ENCODE measurements at regions of chr16 and their contacts with region 1.

Region 1: DNA sequence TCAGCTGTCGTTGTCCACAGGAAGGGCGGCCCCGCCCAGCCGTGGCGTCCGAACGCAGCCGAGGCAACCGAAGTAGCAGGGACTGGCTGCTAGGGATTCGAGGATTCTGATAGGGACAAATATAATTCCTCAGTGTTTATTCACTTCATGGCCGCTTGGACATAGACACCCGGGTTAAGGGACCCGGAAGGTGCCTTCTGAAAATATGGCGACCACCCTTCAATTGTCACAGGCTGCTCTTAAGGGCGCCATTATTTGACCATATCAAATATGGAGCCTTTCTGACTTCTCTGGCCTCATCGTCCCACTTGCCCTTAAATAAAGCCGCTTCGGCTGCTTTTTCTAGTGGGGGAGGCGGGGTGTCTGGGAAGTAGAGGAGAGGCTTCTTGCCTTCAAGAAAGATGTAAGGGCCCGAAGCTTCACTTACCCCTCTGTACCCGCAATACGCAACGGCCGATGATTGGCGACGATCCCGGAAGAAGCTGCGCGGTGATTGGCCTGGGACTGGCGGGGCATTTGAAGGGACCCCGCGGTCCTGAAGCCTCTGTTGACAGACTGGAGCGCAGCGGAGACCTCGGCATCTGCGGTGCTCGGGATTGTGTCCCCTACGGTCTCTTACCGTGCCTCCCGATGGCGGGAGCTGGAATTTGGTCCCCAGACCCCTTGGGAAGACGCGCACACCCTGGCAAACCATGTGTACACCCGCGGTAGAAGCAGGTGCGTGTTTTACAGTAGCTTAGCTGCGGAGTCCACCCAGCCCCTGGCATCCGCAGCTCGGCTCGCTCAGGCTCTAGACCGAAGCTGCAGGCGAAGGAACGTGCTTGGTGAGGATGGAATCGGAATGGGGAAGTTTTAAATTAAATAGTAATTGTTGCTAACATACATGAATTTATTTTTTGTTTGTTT is at the start of gene ZNF688:
- DNase-seq: peak; percentile 95 to 97 (median 96)
- H3K4me3 ChIP-seq: peak within 1 kb of the TSS; percentile 81 to 87 (median 87)
- H3K4me3 Mint-ChIP-seq: peak within 1 kb of the TSS; percentile 81 to 91
- H3K27ac ChIP-seq: peak within 1 kb of the TSS; percentile 73 to 90
- H3K27ac Mint-ChIP-seq: peak within 1 kb of the TSS; percentile 91 to 98 (median 96)
- H3K4me1 ChIP-seq: peaks cover 48 to 65% of the 10 kb centered on the region in 2 donors
- H3K4me1 Mint-ChIP-seq: peaks cover 52% of the 10 kb centered on the region
- H3K27me3 ChIP-seq: no peaks in the 10 kb centered on the region
- H3K27me3 Mint-ChIP-seq: peaks cover 0 to 1% (median 1%) of the 10 kb centered on the region in 3 donors
- CTCF ChIP-seq: no peak
- polyA plus RNA-seq, gene ZNF688: 10.3 to 24.1 (median 18.9) TPM

Region 2: DNA sequence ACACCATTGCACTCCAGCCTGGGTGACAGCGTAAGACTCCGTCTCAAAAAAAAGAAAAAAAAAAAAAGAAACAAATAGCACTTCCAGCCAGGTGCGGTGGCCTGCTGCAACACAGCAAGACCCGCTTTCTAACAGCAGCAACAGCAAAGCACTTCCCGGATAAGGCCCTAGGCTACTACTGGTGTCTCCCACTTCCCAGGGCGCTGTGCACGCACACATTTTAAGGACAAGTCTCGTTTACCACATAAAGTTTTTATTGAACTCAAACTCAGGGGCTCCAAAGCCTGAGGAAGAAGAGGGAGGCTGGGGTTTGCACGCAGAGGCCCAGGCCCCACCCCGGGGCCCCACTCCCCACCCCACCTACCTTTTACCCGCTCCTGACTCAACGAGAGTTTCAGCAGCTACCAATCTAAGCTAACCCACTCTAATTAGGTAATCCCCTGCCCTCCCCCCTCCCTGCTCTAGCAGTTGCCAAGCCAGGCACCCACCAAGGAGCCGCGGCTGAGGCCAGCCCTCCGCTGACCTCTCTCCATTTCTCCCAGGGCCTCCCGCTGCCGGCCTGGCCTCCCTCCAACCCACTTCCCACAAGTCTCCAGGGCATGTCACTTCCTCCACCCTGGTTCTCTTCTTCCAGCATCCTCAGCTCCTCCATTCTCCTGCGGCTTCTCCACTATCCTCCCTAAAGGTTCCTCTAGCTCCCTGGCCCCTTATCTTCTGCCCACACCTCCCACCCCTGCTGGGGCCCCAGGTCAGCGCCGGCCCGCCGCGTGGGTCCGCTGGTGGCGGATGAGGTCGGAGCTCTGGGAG is 48.0 kb before region 1 on chr16:
- intact Hi-C with region 1: no loop called
- DNase-seq: no peak
- H3K4me3 ChIP-seq: no peak overlapping the region
- H3K4me3 Mint-ChIP-seq: no peak overlapping the region
- H3K27ac ChIP-seq: no peak overlapping the region
- H3K27ac Mint-ChIP-seq: peak overlapping the region in 2 of 7 donors; percentile 50 to 80
- H3K4me1 ChIP-seq: peaks cover 24 to 33% of the 10 kb centered on the region in 2 donors
- H3K4me1 Mint-ChIP-seq: peaks cover 22% of the 10 kb centered on the region
- H3K27me3 ChIP-seq: no peaks in the 10 kb centered on the region
- H3K27me3 Mint-ChIP-seq: peaks cover 0 to 4% (median 0%) of the 10 kb centered on the region in 3 donors
- CTCF ChIP-seq: no peak

Region 3: GRCh38 chr16:30534368-30535105 is 37.4 kb before region 1 on chr16 and contains the start of gene ZNF747:
- intact Hi-C with region 1: loop called (anchors 1 to 5 kb)
- DNase-seq: peak; percentile 76 to 82 (median 81)
- H3K4me3 ChIP-seq: peak within 1 kb of the TSS; percentile 71 to 91 (median 87)
- H3K4me3 Mint-ChIP-seq: peak within 1 kb of the TSS; percentile 90 to 97
- H3K27ac ChIP-seq: peak within 1 kb of the TSS; percentile 76 to 80
- H3K27ac Mint-ChIP-seq: peak within 1 kb of the TSS; percentile 87 to 94 (median 91)
- H3K4me1 ChIP-seq: peaks cover 28 to 35% of the 10 kb centered on the region in 2 donors
- H3K4me1 Mint-ChIP-seq: peaks cover 36% of the 10 kb centered on the region
- H3K27me3 ChIP-seq: no peaks in the 10 kb centered on the region
- H3K27me3 Mint-ChIP-seq: peaks cover 0 to 6% (median 2%) of the 10 kb centered on the region in 3 donors
- CTCF ChIP-seq: no peak
- polyA plus RNA-seq, gene ZNF747: 4.1 to 6.6 (median 4.4) TPM

Region 4: GRCh38 chr16:30657866-30658730 is 86.2 kb after region 1 on chr16 and contains the start of gene FBRS:
- intact Hi-C with region 1: loop called in 1 of 2 experiments (anchors 5 kb)
- DNase-seq: peak; percentile 100
- H3K4me3 ChIP-seq: peak within 1 kb of the TSS; percentile 81 to 99 (median 86)
- H3K4me3 Mint-ChIP-seq: peak within 1 kb of the TSS; percentile 90 to 99
- H3K27ac ChIP-seq: peak within 1 kb of the TSS; percentile 93 to 99
- H3K27ac Mint-ChIP-seq: peak within 1 kb of the TSS; percentile 100
- H3K4me1 ChIP-seq: peaks cover 33 to 45% of the 10 kb centered on the region in 2 donors
- H3K4me1 Mint-ChIP-seq: peaks cover 38% of the 10 kb centered on the region
- H3K27me3 ChIP-seq: no peaks in the 10 kb centered on the region
- H3K27me3 Mint-ChIP-seq: peaks cover 0 to 1% (median 0%) of the 10 kb centered on the region in 3 donors
- CTCF ChIP-seq: peak; percentile 68
- polyA plus RNA-seq, gene FBRS: 1.4 to 44.8 (median 2.1) TPM